ENCODE measurements at regions of chr10 and their contacts with region 1.

Region 1: GRCh38 chr10:133261726-133262325 is 14.8 kb downstream of the ADAM8 start:
- DNase-seq: peak; percentile 91
- ATAC-seq: peak; percentile 41
- H3K4me3 Mint-ChIP-seq: peak overlapping the region; percentile 76
- H3K27ac Mint-ChIP-seq: no peak overlapping the region
- H3K4me1 Mint-ChIP-seq: peaks cover 66% of the 10 kb centered on the region
- H3K27me3 Mint-ChIP-seq: peaks cover 2% of the 10 kb centered on the region
- CTCF ChIP-seq: no peak

Region 2: GRCh38 chr10:133124357-133125211 is 137.2 kb before region 1 on chr10:
- CTCF ChIA-PET with region 1: no interaction called
- POLR2A ChIA-PET with region 1: no interaction called
- intact Hi-C with region 1: no loop called
- DNase-seq: peak; percentile 42
- ATAC-seq: peak; percentile 41
- H3K4me3 Mint-ChIP-seq: no peak overlapping the region
- H3K27ac Mint-ChIP-seq: no peak overlapping the region
- H3K4me1 Mint-ChIP-seq: peaks cover 5% of the 10 kb centered on the region
- H3K27me3 Mint-ChIP-seq: peaks cover 14% of the 10 kb centered on the region
- CTCF ChIP-seq: peak; percentile 66

Region 3: GRCh38 chr10:133273534-133274143 is 11.8 kb after region 1 on chr10:
- CTCF ChIA-PET with region 1: interaction called, 28 read pairs
- POLR2A ChIA-PET with region 1: interaction called, 46 read pairs
- intact Hi-C with region 1: no loop called
- DNase-seq: no peak
- ATAC-seq: no peak
- H3K4me3 Mint-ChIP-seq: no peak overlapping the region
- H3K27ac Mint-ChIP-seq: no peak overlapping the region
- H3K4me1 Mint-ChIP-seq: peaks cover 15% of the 10 kb centered on the region
- H3K27me3 Mint-ChIP-seq: no peaks in the 10 kb centered on the region
- CTCF ChIP-seq: no peak

Region 4: GRCh38 chr10:133278577-133279265 is 16.9 kb after region 1 on chr10:
- CTCF ChIA-PET with region 1: interaction called, 28 read pairs
- POLR2A ChIA-PET with region 1: interaction called, 46 read pairs
- intact Hi-C with region 1: no loop called
- DNase-seq: peak; percentile 80
- ATAC-seq: peak; percentile 20
- H3K4me3 Mint-ChIP-seq: peak overlapping the region; percentile 57
- H3K27ac Mint-ChIP-seq: peak overlapping the region; percentile 71
- H3K4me1 Mint-ChIP-seq: peaks cover 26% of the 10 kb centered on the region
- H3K27me3 Mint-ChIP-seq: no peaks in the 10 kb centered on the region
- CTCF ChIP-seq: no peak

Measured in activated CD8-positive, alpha-beta T cell treated with anti-CD3 and anti-CD28 coated beads for 36 hours (primary cell).